ENCODE measurements at regions of chr7 and their contacts with region 1.

Region 1: GRCh38 chr7:131045526-131045925 is 282.1 kb upstream of the MKLN1 start:
- DNase-seq: no peak
- H3K4me3 ChIP-seq: no peak overlapping the region
- H3K27ac ChIP-seq: no peak overlapping the region
- H3K4me1 ChIP-seq: no peaks in the 10 kb centered on the region
- H3K27me3 ChIP-seq: no peaks in the 10 kb centered on the region
- CTCF ChIP-seq: no peak

Region 2: DNA sequence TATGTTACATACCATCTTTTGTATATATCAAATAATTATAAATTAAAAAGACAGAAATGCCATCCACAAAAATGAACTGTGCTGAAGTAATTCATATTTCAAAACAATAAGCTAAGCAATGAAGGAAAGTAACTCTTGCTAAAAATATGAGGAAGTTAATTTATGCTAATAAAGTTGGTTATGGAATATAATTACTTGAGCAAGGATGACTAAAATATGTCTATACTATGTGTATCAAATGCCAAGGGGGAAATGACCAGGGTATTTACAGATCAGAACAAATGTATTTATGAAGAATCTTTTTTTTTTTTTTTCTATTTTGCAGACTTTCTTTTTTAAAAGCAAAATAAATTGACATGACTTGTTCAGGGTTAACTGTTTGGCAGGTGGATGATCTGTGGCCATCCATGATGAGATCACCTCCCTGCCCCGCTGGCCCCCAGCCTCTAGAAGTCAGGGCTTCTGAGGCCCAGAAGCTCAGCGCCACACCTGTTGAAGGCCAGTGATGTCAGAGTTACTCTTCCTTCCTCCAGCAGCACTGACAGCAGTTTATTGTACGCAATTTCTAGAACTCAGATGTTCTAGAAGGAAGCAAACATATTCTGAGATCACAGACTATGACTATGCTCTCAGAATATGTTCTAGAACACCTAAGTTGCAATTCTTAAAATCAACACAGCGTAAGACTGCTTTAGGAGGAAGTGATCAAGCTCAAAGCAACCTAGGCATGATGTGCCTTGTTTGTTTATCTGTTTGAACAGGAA is 115.4 kb before region 1 on chr7:
- CTCF ChIA-PET with region 1: no interaction called
- dilution Hi-C with region 1: no loop called
- in situ Hi-C with region 1: no loop called
- intact Hi-C with region 1: no loop called
- DNase-seq: no peak
- H3K4me3 ChIP-seq: no peak overlapping the region
- H3K27ac ChIP-seq: no peak overlapping the region
- H3K4me1 ChIP-seq: no peaks in the 10 kb centered on the region
- H3K27me3 ChIP-seq: no peaks in the 10 kb centered on the region
- CTCF ChIP-seq: no peak

Region 3: DNA sequence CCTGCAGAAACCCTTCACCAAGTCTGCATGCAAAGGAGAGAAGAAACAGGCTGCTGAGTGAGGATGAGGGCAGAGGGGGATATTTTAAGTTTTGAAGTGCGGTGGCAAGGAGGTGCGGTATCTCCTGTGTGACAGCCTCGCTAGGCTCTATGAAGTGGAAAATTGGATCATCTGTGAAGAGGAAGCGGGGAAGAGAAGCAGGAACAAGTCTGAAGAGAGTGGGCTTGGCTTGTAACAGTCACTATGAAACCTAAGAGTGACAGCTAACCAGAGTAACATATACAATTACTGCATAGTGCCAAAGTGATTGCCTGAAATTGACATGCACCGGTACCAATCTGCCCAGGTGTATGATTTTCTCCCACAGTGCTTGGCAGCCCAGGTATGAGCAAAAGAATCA is 24.1 kb before region 1 on chr7:
- CTCF ChIA-PET with region 1: no interaction called
- dilution Hi-C with region 1: no loop called
- in situ Hi-C with region 1: no loop called
- intact Hi-C with region 1: no loop called
- DNase-seq: no peak
- H3K4me3 ChIP-seq: no peak overlapping the region
- H3K27ac ChIP-seq: no peak overlapping the region
- H3K4me1 ChIP-seq: peaks cover 10% of the 10 kb centered on the region
- H3K27me3 ChIP-seq: no peaks in the 10 kb centered on the region
- CTCF ChIP-seq: no peak

Region 4: GRCh38 chr7:131302876-131303707 is 257.6 kb after region 1 on chr7:
- CTCF ChIA-PET with region 1: interaction called, 10 read pairs
- dilution Hi-C with region 1: no loop called
- in situ Hi-C with region 1: no loop called
- intact Hi-C with region 1: no loop called
- DNase-seq: peak; percentile 38
- H3K4me3 ChIP-seq: no peak overlapping the region
- H3K27ac ChIP-seq: no peak overlapping the region
- H3K4me1 ChIP-seq: no peaks in the 10 kb centered on the region
- H3K27me3 ChIP-seq: no peaks in the 10 kb centered on the region
- CTCF ChIP-seq: peak; percentile 73 to 86